Calu3 (cell line): ENCODE measurements at regions of chr3 and their contacts with region 1.

Region 1: DNA sequence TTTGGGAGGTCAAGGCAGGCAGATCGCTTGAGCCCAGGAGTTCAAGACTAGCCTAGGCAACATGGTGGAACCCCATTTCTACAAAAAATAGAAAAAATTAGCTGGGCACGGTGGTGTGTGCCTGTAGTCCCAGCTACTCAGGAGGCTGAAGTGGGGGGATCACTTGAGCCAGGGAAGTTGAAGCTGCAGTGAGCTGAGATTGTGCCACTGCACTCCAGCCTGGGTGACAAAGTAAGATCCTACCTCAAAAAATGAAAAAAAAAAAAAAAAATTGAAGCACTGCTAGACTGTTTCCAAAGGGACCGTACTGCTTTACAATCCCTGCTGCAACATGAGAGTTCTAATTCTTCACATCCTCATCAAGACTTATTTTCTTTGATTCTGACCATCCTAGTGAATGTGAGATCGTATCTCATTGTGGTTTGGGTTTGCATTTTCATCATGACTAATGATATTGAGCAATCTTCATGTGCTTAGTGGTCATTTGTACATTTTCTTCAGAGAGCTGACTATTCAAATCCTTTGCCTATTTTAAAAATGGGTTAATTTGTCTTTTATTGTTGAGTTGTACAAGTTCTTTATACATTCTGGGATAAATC is 10.8 kb downstream of the CMTM8 start:
- DNase-seq: no peak
- H3K4me3 Mint-ChIP-seq: no peak overlapping the region
- H3K27ac Mint-ChIP-seq: no peak overlapping the region
- H3K4me1 Mint-ChIP-seq: peaks cover 16% of the 10 kb centered on the region
- H3K27me3 Mint-ChIP-seq: no peaks in the 10 kb centered on the region
- CTCF ChIP-seq: no peak

Region 2: DNA sequence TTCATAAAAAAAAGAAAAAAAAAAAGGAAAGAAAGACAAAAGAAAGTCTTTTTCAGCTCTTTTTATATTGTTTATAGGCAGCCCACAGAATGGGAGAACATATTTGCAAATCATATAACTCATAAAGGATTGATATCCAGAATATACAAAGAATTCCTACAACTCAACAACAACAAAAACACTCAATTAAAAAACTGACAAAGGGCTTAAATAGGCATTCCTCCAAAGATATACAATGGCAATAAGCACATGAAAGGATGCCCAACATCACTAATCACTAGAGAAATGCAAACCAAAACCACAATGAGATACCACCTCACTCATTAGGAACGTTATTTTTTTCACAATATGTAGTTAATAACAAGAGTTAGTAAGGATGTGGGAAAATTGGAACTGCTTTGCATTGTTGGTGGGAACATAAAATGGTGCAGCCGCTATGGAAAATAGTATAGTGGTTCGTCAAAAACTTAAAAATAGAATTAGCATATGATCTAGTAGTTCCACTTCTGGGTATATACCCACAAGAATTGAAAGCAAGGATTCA is 65.0 kb before region 1 on chr3:
- CTCF ChIA-PET with region 1: no interaction called
- intact Hi-C with region 1: no loop called
- DNase-seq: no peak
- H3K4me3 Mint-ChIP-seq: no peak overlapping the region
- H3K27ac Mint-ChIP-seq: no peak overlapping the region
- H3K4me1 Mint-ChIP-seq: no peaks in the 10 kb centered on the region
- H3K27me3 Mint-ChIP-seq: no peaks in the 10 kb centered on the region
- CTCF ChIP-seq: no peak

Region 3: DNA sequence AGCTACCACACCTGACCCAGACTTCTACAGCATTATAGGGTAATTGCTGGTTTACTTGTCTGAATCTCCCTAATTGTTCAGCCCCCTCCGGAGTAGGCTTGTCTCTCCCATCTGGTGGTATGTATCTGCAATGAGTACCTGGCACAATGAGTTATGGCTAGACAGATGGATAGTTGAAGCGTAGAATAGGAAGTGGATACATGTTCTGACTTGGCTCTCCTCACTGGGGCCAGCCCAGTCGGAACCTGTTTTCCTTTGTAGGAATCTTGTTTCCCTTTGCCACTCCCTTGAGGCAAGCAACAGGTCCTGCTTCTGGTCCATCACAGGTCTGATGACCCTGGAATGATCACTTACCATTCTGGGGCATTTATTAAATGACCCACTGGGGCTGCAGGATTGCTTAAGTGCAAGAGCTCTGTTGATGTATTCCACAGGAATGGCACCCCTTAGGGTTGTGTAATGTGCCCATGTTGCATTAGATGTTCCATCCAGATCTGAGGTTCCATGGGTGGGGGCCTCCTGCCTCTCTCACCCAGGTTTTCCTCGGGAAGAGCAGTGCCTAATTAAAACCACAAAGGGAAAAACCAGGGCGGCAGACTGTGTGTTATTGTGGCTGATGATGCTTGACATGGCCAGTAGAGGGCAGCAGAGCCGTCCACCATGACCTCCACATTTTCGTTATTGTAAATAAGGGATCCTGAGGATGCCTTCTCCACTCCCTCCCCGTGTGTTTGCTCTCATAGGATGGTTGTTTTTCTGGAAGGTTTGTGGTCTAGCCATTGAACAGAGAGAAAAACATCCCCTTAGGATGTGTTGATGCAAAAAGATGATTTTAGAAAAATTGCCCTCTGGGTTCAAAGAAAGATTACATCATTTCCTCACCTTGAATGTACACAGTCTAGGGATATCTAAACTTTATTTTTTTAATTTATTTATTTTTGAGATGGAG is 47.2 kb after region 1 on chr3:
- CTCF ChIA-PET with region 1: no interaction called
- intact Hi-C with region 1: loop called (anchors 5 kb)
- DNase-seq: peak; percentile 52
- H3K4me3 Mint-ChIP-seq: no peak overlapping the region
- H3K27ac Mint-ChIP-seq: no peak overlapping the region
- H3K4me1 Mint-ChIP-seq: peaks cover 11% of the 10 kb centered on the region
- H3K27me3 Mint-ChIP-seq: no peaks in the 10 kb centered on the region
- CTCF ChIP-seq: peak; percentile 71